SK-N-SH (cell line): ENCODE measurements at regions of chr6 and their contacts with region 1.

Region 1: GRCh38 chr6:136889271-136890191 is 32.6 kb upstream of the SLC35D3 start:
- DNase-seq: no peak
- H3K4me3 ChIP-seq: no peak overlapping the region
- H3K27ac ChIP-seq: peak overlapping the region in 1 of 2 experiments; percentile 69; a peak in 2 of 4 replicates
- H3K4me1 ChIP-seq: peaks cover 6 to 14% of the 10 kb centered on the region in 2 experiments; a peak in 3 of 4 replicates
- H3K27me3 ChIP-seq: no peaks in the 10 kb centered on the region
- CTCF ChIP-seq: no peak
- EP300 ChIP-seq: no peak
- RAD21 ChIP-seq: no peak

Region 2: GRCh38 chr6:136812174-136812573 is 77.4 kb before region 1 on chr6:
- CTCF ChIA-PET with region 1: no interaction called
- POLR2A ChIA-PET with region 1: no interaction called
- DNase-seq: no peak
- H3K4me3 ChIP-seq: no peak overlapping the region
- H3K27ac ChIP-seq: no peak overlapping the region
- H3K4me1 ChIP-seq: no peaks in the 10 kb centered on the region
- H3K27me3 ChIP-seq: no peaks in the 10 kb centered on the region
- CTCF ChIP-seq: no peak
- EP300 ChIP-seq: no peak
- RAD21 ChIP-seq: no peak

Region 3: GRCh38 chr6:136901212-136901784 is 11.8 kb after region 1 on chr6:
- CTCF ChIA-PET with region 1: interaction called, 10 read pairs
- POLR2A ChIA-PET with region 1: no interaction called
- DNase-seq: no peak
- H3K4me3 ChIP-seq: no peak overlapping the region
- H3K27ac ChIP-seq: no peak overlapping the region
- H3K4me1 ChIP-seq: no peaks in the 10 kb centered on the region; a peak in 2 of 4 replicates
- H3K27me3 ChIP-seq: no peaks in the 10 kb centered on the region
- CTCF ChIP-seq: no peak
- EP300 ChIP-seq: no peak
- RAD21 ChIP-seq: no peak

Region 4: GRCh38 chr6:137019476-137020272 is 130.1 kb after region 1 on chr6:
- CTCF ChIA-PET with region 1: no interaction called
- POLR2A ChIA-PET with region 1: no interaction called
- DNase-seq: no peak
- H3K4me3 ChIP-seq: no peak overlapping the region; a peak in 1 of 4 replicates
- H3K27ac ChIP-seq: peak overlapping the region in 1 of 2 experiments; percentile 90; a peak in 2 of 4 replicates
- H3K4me1 ChIP-seq: peaks cover 0 to 9% of the 10 kb centered on the region in 2 experiments; a peak in 2 of 4 replicates
- H3K27me3 ChIP-seq: no peaks in the 10 kb centered on the region
- CTCF ChIP-seq: no peak
- EP300 ChIP-seq: peak in 1 of 2 experiments; percentile 27; a peak in 1 of 4 replicates
- RAD21 ChIP-seq: no peak